Activated naive CD4-positive, alpha-beta T cell treated with anti-CD3 and anti-CD28 coated beads for 36 hours (primary cell): ENCODE measurements at regions of chr5 and their contacts with region 1.

Region 1: GRCh38 chr5:87121304-87122150 is 146.2 kb upstream of the RASA1 start:
- DNase-seq: peak; percentile 58
- H3K4me3 Mint-ChIP-seq: no peak overlapping the region
- H3K27ac Mint-ChIP-seq: peak overlapping the region; percentile 4
- H3K4me1 Mint-ChIP-seq: peaks cover 56% of the 10 kb centered on the region
- H3K27me3 Mint-ChIP-seq: no peaks in the 10 kb centered on the region

Region 2: GRCh38 chr5:86917117-86917579 is 204.4 kb before region 1 on chr5:
- CTCF ChIA-PET with region 1: no interaction called
- intact Hi-C with region 1: loop called (anchors 10 kb)
- DNase-seq: peak; percentile 17
- H3K4me3 Mint-ChIP-seq: no peak overlapping the region
- H3K27ac Mint-ChIP-seq: no peak overlapping the region
- H3K4me1 Mint-ChIP-seq: peaks cover 1% of the 10 kb centered on the region
- H3K27me3 Mint-ChIP-seq: peaks cover 8% of the 10 kb centered on the region

Region 3: GRCh38 chr5:87029951-87030350 is 91.6 kb before region 1 on chr5:
- CTCF ChIA-PET with region 1: no interaction called
- intact Hi-C with region 1: no loop called
- DNase-seq: no peak
- H3K4me3 Mint-ChIP-seq: no peak overlapping the region
- H3K27ac Mint-ChIP-seq: no peak overlapping the region
- H3K4me1 Mint-ChIP-seq: peaks cover 25% of the 10 kb centered on the region
- H3K27me3 Mint-ChIP-seq: no peaks in the 10 kb centered on the region

Region 4: DNA sequence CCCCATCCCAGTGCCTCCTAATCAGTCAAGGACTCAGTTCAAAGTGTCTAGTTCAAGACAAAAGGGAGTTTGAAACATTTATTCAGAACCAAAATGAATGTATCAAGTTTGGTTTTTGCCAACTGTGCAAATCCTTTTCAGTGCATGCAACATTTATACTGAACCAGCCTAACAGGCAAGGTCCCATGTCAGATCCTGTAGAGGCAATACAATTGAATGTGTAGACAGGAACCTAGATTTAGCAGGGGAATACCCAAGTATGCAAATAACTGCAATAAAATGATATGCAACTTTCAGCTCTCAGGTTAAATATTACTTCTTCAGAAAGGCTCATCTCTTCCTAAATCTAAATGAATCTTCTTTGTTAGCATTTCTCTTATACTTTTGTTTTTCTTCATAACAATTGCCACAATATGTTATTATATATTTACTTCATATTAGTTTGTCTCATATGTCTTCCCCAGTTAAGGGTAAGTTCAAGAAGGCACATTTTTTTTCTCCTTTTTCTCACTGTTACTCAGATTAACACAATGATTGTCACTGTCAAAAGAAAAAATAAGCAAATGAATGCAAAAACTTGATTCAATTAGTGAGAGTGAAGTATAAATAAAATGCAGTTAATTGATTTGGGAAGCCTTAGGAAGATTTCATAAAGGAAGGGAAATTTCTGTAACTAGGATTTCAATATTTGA is 17.8 kb before region 1 on chr5:
- CTCF ChIA-PET with region 1: no interaction called
- intact Hi-C with region 1: loop called (anchors 1 kb)
- DNase-seq: no peak
- H3K4me3 Mint-ChIP-seq: no peak overlapping the region
- H3K27ac Mint-ChIP-seq: no peak overlapping the region
- H3K4me1 Mint-ChIP-seq: peaks cover 7% of the 10 kb centered on the region
- H3K27me3 Mint-ChIP-seq: no peaks in the 10 kb centered on the region

Region 5: GRCh38 chr5:87195104-87195591 is 73.6 kb after region 1 on chr5:
- CTCF ChIA-PET with region 1: no interaction called
- intact Hi-C with region 1: loop called (anchors 2 kb)
- DNase-seq: peak; percentile 55
- H3K4me3 Mint-ChIP-seq: no peak overlapping the region
- H3K27ac Mint-ChIP-seq: no peak overlapping the region
- H3K4me1 Mint-ChIP-seq: peaks cover 14% of the 10 kb centered on the region
- H3K27me3 Mint-ChIP-seq: no peaks in the 10 kb centered on the region

Region 6: GRCh38 chr5:87282269-87282668 is 160.7 kb after region 1 on chr5:
- CTCF ChIA-PET with region 1: no interaction called
- intact Hi-C with region 1: loop called (anchors 2 kb)
- DNase-seq: no peak
- H3K4me3 Mint-ChIP-seq: peak overlapping the region; percentile 57
- H3K27ac Mint-ChIP-seq: peak overlapping the region; percentile 77
- H3K4me1 Mint-ChIP-seq: peaks cover 43% of the 10 kb centered on the region
- H3K27me3 Mint-ChIP-seq: no peaks in the 10 kb centered on the region

Region 7: GRCh38 chr5:87412630-87413342 is 291.3 kb after region 1 on chr5 and contains the start of gene CCNH:
- CTCF ChIA-PET with region 1: interaction called, 4 read pairs
- intact Hi-C with region 1: loop called (anchors 1 kb)
- DNase-seq: peak; percentile 98
- H3K4me3 Mint-ChIP-seq: peak within 1 kb of the TSS; percentile 95
- H3K27ac Mint-ChIP-seq: peak within 1 kb of the TSS; percentile 95
- H3K4me1 Mint-ChIP-seq: peaks cover 34% of the 10 kb centered on the region
- H3K27me3 Mint-ChIP-seq: no peaks in the 10 kb centered on the region
- total RNA-seq, gene CCNH: 58.1 to 61.6 TPM

Region 8: DNA sequence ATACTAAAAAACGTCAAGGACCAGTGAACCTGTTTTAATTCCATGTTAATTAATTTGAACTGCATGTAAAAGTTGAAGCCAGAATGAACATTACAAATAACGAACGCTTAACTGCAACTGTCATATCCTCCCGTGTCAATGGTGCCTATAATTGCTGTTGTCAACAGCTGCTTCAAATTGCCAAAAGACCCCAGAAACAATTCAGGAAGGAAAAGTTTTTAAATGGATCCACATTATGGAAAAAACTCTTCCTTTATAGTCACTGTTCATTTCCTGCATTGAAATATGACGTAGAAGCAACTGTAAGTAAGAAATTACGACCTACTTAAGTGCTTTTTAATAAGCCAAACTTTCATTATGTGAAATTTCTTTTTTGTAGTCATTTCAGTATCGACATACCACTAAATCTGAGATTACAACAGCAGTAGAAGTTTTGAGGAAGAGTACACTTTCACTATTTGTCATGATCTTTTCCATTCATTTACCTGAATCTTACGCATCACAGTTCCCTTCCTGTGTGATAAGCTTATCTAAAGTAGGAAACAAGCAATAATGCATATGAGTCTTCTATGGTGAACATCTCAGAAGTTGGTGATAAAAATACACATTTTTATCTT is 1723.7 kb after region 1 on chr5:
- CTCF ChIA-PET with region 1: no interaction called
- intact Hi-C with region 1: loop called (anchors 2 kb)
- DNase-seq: no peak
- H3K4me3 Mint-ChIP-seq: no peak overlapping the region
- H3K27ac Mint-ChIP-seq: no peak overlapping the region
- H3K4me1 Mint-ChIP-seq: peaks cover 8% of the 10 kb centered on the region
- H3K27me3 Mint-ChIP-seq: peaks cover 14% of the 10 kb centered on the region